Activated T-helper 2 cell treated with anti-CD3 and anti-CD28 coated beads, Interferon-gamma antibody, Interleukin-2, Interleukin-4, amounts not matched to agents 10 μg/mL and 5 μg/mL and 100 μg/mL, durations not matched to agents 14 hours and 24 hours and 36 hours (primary cell): ENCODE measurements at regions of chr22 and their contacts with region 1.

Region 1: DNA sequence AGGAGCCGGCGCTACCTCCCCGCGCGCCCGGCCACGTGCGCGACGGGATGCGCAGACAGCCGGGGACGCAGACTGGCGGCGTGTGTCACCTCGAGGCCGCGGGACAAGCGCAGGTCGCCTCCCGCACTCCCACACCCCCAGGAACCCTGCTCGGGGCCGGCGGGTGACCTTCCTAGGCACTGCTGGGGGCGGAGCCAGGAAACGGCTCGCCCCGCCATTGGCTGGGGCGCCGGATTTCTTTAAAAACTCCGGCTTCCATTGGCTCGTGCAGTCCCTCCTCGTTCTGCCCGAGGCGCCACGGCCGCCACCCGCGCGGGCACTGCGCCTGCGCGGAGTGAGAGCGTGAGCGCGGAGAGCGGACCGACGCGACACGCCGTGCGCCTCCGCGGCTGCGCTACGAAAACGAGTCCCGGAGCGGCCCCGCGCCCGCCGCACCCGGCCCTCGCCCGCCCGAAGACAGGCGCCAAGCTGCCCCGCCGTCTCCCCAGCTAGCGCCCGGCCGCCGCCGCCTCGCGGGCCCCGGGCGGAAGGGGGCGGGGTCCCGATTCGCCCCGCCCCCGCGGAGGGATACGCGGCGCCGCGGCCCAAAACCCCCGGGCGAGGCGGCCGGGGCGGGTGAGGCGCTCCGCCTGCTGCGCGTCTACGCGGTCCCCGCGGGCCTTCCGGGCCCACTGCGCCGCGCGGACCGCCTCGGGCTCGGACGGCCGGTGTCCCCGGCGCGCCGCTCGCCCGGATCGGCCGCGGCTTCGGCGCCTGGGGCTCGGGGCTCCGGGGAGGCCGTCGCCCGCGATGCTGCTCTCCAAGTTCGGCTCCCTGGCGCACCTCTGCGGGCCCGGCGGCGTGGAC is at the start of gene PIM3:
- DNase-seq: peak; percentile 91
- H3K4me3 Mint-ChIP-seq: peak within 1 kb of the TSS; percentile 90
- H3K27ac Mint-ChIP-seq: peak within 1 kb of the TSS; percentile 91
- H3K4me1 Mint-ChIP-seq: peaks cover 15% of the 10 kb centered on the region
- H3K27me3 Mint-ChIP-seq: no peaks in the 10 kb centered on the region
- total RNA-seq, gene PIM3: 215 TPM in 2 replicates

Region 2: GRCh38 chr22:49936018-49936952 is 24.1 kb before region 1 on chr22:
- intact Hi-C with region 1: loop called (anchors 1 kb)
- DNase-seq: peak; percentile 90
- H3K4me3 Mint-ChIP-seq: peak overlapping the region; percentile 52
- H3K27ac Mint-ChIP-seq: peak overlapping the region; percentile 83
- H3K4me1 Mint-ChIP-seq: peaks cover 20% of the 10 kb centered on the region
- H3K27me3 Mint-ChIP-seq: no peaks in the 10 kb centered on the region

Region 3: GRCh38 chr22:49975543-49976389 is 15.4 kb after region 1 on chr22:
- intact Hi-C with region 1: loop called (anchors 2 kb)
- DNase-seq: no peak
- H3K4me3 Mint-ChIP-seq: peak overlapping the region; percentile 51
- H3K27ac Mint-ChIP-seq: peak overlapping the region; percentile 92
- H3K4me1 Mint-ChIP-seq: peaks cover 24% of the 10 kb centered on the region
- H3K27me3 Mint-ChIP-seq: no peaks in the 10 kb centered on the region